Mammary epithelial cell (primary cell): ENCODE measurements at regions of chr17 and their contacts with region 1.

Region 1: GRCh38 chr17:27654654-27655524 is 23.9 kb downstream of the LGALS9 start:
- DNase-seq: peak; percentile 47
- H3K4me3 ChIP-seq: no peak overlapping the region
- H3K27ac ChIP-seq: no peak overlapping the region
- H3K4me1 ChIP-seq: no peaks in the 10 kb centered on the region
- H3K27me3 ChIP-seq: peaks cover under 1% of the 10 kb centered on the region
- CTCF ChIP-seq: peak; percentile 55 to 74

Region 2: GRCh38 chr17:27091043-27091497 is 563.8 kb before region 1 on chr17:
- CTCF ChIA-PET with region 1: no interaction called
- dilution Hi-C with region 1: no loop called
- in situ Hi-C with region 1: loop called in 1 of 2 experiments (anchors 25 kb)
- intact Hi-C with region 1: no loop called
- DNase-seq: no peak
- H3K4me3 ChIP-seq: no peak overlapping the region
- H3K27ac ChIP-seq: no peak overlapping the region
- H3K4me1 ChIP-seq: no peaks in the 10 kb centered on the region
- H3K27me3 ChIP-seq: no peaks in the 10 kb centered on the region
- CTCF ChIP-seq: no peak

Region 3: DNA sequence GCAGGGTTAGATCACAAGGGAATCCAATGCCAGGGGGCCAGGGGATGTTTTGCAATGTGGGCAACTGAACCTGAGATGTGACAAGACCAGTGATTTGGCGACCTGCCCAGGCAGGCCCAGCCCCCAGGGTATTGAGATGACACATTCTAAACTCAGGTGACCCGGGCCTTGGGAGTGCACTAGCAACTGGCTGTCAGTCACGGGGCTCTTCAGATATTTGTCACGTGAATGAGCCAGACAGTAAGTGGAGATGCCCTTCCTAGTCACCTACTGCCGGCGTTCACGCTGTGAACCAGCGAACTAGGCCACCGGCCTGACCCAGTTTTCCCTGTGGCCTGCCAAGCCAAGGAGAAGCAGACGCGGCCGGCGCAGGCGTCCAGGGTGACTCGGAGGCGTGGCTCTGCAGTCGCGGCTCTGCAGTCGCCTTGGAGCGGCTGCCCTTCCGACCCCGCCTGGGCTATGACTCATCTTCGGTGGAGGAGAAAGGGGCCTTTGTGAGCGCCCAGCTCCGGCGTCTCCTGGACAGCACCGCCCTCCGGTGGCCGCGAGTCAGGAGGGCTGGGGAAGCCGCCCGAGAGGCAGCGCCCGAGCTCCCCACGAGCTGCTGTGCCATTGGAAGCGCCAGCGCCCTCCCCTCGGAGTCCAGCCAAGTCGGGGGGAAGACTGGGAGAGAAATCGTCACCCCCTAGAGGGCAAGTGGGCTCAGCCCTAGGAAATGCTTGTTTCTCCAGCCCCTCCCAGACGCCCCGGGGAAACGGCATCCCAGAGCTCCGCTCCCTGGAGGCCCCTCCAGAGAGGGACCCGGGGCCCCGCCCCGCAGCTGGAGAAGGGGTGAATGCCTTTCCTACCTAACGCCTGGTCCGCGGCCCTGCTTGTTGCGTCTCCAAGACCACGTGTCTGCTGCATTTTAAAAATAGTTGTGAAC is 322.1 kb before region 1 on chr17:
- CTCF ChIA-PET with region 1: interaction called, 11 read pairs
- dilution Hi-C with region 1: no loop called
- in situ Hi-C with region 1: no loop called
- intact Hi-C with region 1: no loop called
- DNase-seq: peak; percentile 98
- H3K4me3 ChIP-seq: peak overlapping the region; percentile 51 to 62 (median 57)
- H3K27ac ChIP-seq: peak overlapping the region; percentile 89
- H3K4me1 ChIP-seq: peaks cover 30% of the 10 kb centered on the region
- H3K27me3 ChIP-seq: no peaks in the 10 kb centered on the region
- CTCF ChIP-seq: peak; percentile 65 to 91

Region 4: GRCh38 chr17:27494192-27495091 is 160.4 kb before region 1 on chr17:
- CTCF ChIA-PET with region 1: no interaction called
- dilution Hi-C with region 1: no loop called
- in situ Hi-C with region 1: no loop called
- intact Hi-C with region 1: loop called (anchors 5 kb)
- DNase-seq: peak; percentile 51
- H3K4me3 ChIP-seq: peak overlapping the region; percentile 8 to 34 (median 22)
- H3K27ac ChIP-seq: no peak overlapping the region
- H3K4me1 ChIP-seq: peaks cover 22% of the 10 kb centered on the region
- H3K27me3 ChIP-seq: no peaks in the 10 kb centered on the region
- CTCF ChIP-seq: peak; percentile 42 to 77

Region 5: GRCh38 chr17:27670791-27671590 is 16.1 kb after region 1 on chr17:
- CTCF ChIA-PET with region 1: no interaction called
- dilution Hi-C with region 1: no loop called
- in situ Hi-C with region 1: no loop called
- intact Hi-C with region 1: no loop called
- DNase-seq: no peak
- H3K4me3 ChIP-seq: no peak overlapping the region
- H3K27ac ChIP-seq: no peak overlapping the region
- H3K4me1 ChIP-seq: no peaks in the 10 kb centered on the region
- H3K27me3 ChIP-seq: no peaks in the 10 kb centered on the region
- CTCF ChIP-seq: no peak

Region 6: GRCh38 chr17:27760069-27760885 is 105.4 kb after region 1 on chr17:
- CTCF ChIA-PET with region 1: interaction called, 4 read pairs
- dilution Hi-C with region 1: no loop called
- in situ Hi-C with region 1: loop called in 1 of 2 experiments (anchors 25 kb)
- intact Hi-C with region 1: loop called (anchors 1 kb)
- DNase-seq: peak; percentile 19
- H3K4me3 ChIP-seq: no peak overlapping the region
- H3K27ac ChIP-seq: no peak overlapping the region
- H3K4me1 ChIP-seq: no peaks in the 10 kb centered on the region
- H3K27me3 ChIP-seq: no peaks in the 10 kb centered on the region
- CTCF ChIP-seq: peak; percentile 60 to 84

Region 7: DNA sequence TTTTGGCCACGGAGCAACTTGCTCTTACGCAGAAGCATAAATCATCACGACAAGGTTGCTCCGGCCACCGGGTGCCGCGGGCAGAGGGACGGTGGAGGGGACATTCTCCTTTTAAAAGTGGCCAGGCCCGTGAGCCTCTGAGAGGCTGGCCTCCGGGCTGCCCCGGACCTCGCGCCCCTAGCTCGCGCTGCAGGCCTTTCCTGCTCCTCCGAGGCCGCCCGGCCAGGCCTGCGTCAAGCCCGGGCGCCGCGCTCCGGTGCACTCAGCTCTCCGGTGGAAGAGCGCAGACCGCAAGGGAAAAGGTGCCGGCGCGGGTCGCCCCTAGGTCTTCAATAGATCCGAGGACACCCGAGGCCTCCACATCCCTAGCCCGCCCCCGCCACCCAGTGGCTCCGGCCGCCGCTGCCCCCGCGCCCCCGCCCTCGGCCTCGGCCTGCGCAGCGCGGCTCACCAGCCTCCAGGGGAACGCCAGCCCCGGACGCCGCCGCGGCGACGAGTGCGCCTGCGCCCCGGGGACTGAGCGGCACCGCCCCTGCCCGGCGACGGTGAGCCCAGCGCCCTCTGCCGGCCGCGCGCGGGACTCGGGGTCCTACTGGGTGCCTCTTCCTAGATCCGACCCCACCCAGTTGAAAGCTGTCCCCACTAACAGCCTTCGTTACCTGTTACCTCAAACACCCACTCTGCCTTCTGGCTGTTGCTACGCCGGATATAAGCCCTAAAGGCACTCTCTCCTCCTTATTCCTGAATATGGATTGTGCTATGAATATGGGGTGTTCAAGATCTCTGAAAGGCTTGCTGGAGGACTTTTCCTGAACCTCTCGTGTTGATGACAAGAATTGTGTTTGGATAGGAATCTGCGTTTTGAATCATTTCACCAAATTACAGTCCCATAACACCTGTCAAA is 238.2 kb after region 1 on chr17 and contains the start of gene LYRM9:
- CTCF ChIA-PET with region 1: no interaction called
- dilution Hi-C with region 1: no loop called
- in situ Hi-C with region 1: loop called (anchors 10 to 25 kb)
- intact Hi-C with region 1: no loop called
- DNase-seq: peak; percentile 78
- H3K4me3 ChIP-seq: peak within 1 kb of the TSS; percentile 54 to 68 (median 58)
- H3K27ac ChIP-seq: no peak within 1 kb of the TSS
- H3K4me1 ChIP-seq: no peaks in the 10 kb centered on the region
- H3K27me3 ChIP-seq: no peaks in the 10 kb centered on the region
- CTCF ChIP-seq: peak; percentile 74 to 78
- total RNA-seq, gene LYRM9: 4.3 to 9.8 TPM